Sigmoid colon (tissue), 7 donors: ENCODE measurements at regions of chr1 and their contacts with region 1.

Region 1: GRCh38 chr1:19029191-19030105 is 73.0 kb upstream of the IFFO2 start:
- DNase-seq: no peak
- H3K4me3 ChIP-seq: no peak overlapping the region
- H3K27ac ChIP-seq: no peak overlapping the region
- H3K4me1 ChIP-seq: peaks cover 0 to 11% (median 4%) of the 10 kb centered on the region in 4 donors
- H3K27me3 ChIP-seq: no peaks in the 10 kb centered on the region
- CTCF ChIP-seq: no peak
- EP300 ChIP-seq: no peak
- POLR2A ChIP-seq: no peak

Region 2: GRCh38 chr1:18618546-18619466 is 410.6 kb before region 1 on chr1:
- intact Hi-C with region 1: loop called (anchors 10 kb)
- DNase-seq: no peak
- H3K4me3 ChIP-seq: no peak overlapping the region
- H3K27ac ChIP-seq: no peak overlapping the region
- H3K4me1 ChIP-seq: no peaks in the 10 kb centered on the region
- H3K27me3 ChIP-seq: peaks cover 0 to 78% (median 15%) of the 10 kb centered on the region in 3 donors
- CTCF ChIP-seq: no peak
- EP300 ChIP-seq: no peak
- POLR2A ChIP-seq: no peak

Region 3: DNA sequence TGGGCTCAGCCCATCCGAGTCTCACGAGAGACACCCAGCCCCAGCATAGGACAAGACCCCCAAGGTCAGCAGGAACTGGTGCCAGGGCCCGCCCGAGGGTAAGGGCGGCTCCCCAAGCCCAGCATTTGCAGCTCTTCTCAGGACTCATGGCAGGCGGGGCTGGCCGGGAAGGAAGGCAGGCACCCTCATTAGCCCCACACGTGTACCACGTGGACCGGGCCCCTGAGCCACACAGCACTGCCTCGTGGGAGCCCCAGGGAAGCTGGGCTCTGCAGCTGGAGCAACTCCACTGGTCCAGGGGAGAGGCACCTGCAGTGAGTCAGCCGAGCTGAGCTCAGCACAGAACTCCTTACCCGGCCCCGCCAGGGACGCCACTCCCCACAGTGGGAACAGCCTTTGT is 24.8 kb after region 1 on chr1:
- intact Hi-C with region 1: no loop called
- DNase-seq: no peak
- H3K4me3 ChIP-seq: no peak overlapping the region
- H3K27ac ChIP-seq: no peak overlapping the region
- H3K4me1 ChIP-seq: no peaks in the 10 kb centered on the region
- H3K27me3 ChIP-seq: peaks cover 7 to 28% (median 24%) of the 10 kb centered on the region in 3 donors
- CTCF ChIP-seq: no peak
- EP300 ChIP-seq: no peak
- POLR2A ChIP-seq: no peak